Ovary (tissue), 10 donors: ENCODE measurements at regions of chr17 and their contacts with region 1.

Region 1: GRCh38 chr17:6473128-6473767 is 29.0 kb downstream of the PIMREG start:
- DNase-seq: peak; percentile 80 to 90 (median 88)
- H3K4me3 ChIP-seq: no peak overlapping the region
- H3K27ac ChIP-seq: peak overlapping the region in 1 of 2 donors; percentile 21
- H3K4me1 ChIP-seq: peaks cover 11% of the 10 kb centered on the region
- H3K27me3 ChIP-seq: no peaks in the 10 kb centered on the region
- CTCF ChIP-seq: peak; percentile 85 to 95 (median 92)
- EP300 ChIP-seq: no peak
- POLR2A ChIP-seq: no peak

Region 2: DNA sequence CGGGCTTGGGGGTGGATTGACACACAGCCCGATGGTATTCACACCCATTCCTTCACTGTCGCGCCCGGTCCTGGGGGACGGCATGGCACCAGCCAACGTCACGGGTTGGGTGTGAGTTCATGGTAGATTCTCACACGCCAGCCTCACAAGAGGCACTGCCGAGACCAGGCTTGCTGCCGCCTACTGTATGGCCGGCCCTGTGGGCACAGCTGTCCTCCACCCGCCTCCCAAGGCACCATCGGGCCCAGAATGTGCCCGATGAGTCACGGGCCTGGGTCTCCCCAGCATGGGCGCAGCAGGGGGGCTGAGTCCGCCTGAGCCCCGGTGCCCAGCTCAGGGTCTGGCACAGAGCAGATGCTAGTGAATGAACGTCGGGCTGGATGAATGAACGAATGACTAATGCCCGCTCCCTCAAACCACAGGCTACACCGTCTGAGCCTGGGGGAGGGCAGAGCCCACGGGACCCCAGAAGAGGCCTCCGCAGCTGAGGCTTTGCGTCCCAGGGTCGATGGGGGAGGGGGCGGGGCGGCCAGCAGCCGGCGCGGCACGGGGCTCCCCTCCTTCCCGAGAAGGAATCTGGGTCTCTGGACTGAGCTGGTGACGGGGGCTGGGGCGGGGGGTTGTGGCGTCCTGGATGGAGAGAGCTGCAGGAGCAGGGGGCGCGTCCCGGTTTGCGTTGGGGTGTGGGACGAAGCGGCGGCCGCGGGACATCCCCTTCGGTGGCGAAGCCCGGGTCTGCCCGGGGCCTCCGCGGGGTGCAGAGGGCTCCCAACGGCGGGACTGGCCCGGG is 82.3 kb after region 1 on chr17:
- intact Hi-C with region 1: loop called in 2 of 4 experiments (anchors 5 kb)
- DNase-seq: peak; percentile 51 to 75 (median 57)
- H3K4me3 ChIP-seq: peak overlapping the region; percentile 40
- H3K27ac ChIP-seq: peak overlapping the region; percentile 80 to 91
- H3K4me1 ChIP-seq: peaks cover 31% of the 10 kb centered on the region
- H3K27me3 ChIP-seq: no peaks in the 10 kb centered on the region
- CTCF ChIP-seq: no peak
- EP300 ChIP-seq: no peak
- POLR2A ChIP-seq: no peak

Region 3: DNA sequence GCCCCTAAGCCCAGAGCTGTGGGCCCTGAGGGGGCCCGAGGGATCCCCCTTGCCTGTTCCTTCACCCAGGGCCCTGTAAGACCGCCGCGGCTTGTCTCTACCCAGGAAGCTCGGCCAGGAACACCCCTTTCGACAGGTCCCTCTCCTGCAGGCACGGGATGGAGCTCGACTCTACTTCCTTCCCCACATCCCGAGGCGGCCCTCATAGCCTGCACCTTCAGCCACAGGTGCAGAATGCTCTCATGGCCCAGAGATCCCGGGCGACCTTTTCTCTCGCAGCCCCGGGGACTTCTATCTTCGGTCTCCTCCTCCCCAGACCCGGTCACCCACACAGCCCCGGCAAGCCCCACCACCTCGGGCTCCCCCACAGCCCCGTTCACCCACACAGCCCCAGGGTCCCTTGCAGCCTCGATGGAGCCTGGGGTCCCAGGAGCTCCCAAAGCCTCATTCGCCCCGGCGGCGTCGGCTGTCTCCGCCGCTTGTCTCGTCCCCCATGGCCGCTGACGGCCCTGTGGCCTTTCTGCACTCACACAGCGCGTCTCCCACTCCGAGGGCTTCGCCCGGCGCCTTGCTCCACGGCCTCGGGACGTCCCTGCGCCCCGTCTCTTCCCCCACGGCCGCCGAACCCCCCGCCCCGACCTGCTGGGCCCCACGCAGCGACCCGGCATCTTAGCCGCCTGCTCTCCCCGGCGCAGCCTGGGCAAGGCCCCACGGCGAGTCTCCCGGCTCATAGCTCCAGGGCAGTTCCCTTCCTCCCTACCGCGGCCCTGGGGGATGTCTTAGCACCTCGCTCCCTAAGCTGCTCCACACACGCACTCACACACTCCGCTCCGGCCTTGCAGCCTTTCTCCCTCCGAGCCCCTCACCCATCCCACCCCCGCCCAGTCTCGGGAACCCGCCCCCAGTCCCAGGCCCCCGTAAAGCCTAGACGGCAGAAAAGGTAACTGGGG is 166.6 kb after region 1 on chr17:
- intact Hi-C with region 1: loop called in 2 of 4 experiments (anchors 5 to 10 kb)
- DNase-seq: peak; percentile 32 to 62 (median 52)
- H3K4me3 ChIP-seq: peak overlapping the region; percentile 76
- H3K27ac ChIP-seq: peak overlapping the region; percentile 62 to 66
- H3K4me1 ChIP-seq: peaks cover 18% of the 10 kb centered on the region
- H3K27me3 ChIP-seq: no peaks in the 10 kb centered on the region
- CTCF ChIP-seq: no peak
- EP300 ChIP-seq: no peak
- POLR2A ChIP-seq: no peak